MCF 10A (cell line): ENCODE measurements at regions of chr7 and their contacts with region 1.

Region 1: GRCh38 chr7:91089382-91089963 is 174.8 kb upstream of the FZD1 start:
- DNase-seq: peak; percentile 61
- H3K4me3 Mint-ChIP-seq: peak overlapping the region; percentile 56
- H3K27ac Mint-ChIP-seq: no peak overlapping the region
- H3K4me1 Mint-ChIP-seq: no peaks in the 10 kb centered on the region
- H3K27me3 Mint-ChIP-seq: no peaks in the 10 kb centered on the region
- CTCF ChIP-seq: peak; percentile 70

Region 2: DNA sequence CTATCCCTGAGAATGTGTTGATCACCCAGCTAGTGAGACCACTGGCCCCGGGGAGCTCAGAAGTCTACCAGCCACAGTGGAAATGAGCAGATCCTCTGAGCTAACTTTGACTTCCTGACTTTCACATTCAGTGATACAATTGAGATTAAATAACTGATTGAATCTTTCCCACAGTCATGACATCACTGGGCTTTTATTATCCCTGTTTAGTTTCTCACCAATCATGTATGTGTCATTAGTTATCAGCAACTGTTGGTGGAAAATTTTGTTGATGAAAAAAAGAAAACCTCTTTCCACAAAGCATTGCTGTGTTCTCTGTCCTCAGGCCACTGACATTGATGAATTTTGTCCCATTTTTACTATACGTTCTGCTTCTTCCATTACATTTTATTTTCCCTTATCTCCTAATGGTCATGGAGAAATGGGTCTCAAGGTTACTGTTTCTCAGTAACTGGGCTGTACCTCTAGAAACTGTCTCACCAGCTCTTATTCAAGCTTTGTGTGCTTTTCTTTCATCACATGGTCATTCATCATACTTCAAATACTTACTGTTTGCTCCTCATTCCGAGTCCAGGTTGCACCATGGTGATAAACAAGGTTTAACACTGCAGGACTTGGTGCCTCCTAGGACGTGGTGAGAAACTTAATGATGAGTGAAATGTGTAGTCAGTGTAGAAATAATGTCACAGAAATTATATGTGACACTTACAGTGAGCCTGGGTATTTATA is 188.7 kb before region 1 on chr7:
- CTCF ChIA-PET with region 1: no interaction called
- POLR2A ChIA-PET with region 1: no interaction called
- intact Hi-C with region 1: no loop called
- DNase-seq: no peak
- H3K4me3 Mint-ChIP-seq: no peak overlapping the region
- H3K27ac Mint-ChIP-seq: no peak overlapping the region
- H3K4me1 Mint-ChIP-seq: no peaks in the 10 kb centered on the region
- H3K27me3 Mint-ChIP-seq: no peaks in the 10 kb centered on the region
- CTCF ChIP-seq: no peak

Region 3: DNA sequence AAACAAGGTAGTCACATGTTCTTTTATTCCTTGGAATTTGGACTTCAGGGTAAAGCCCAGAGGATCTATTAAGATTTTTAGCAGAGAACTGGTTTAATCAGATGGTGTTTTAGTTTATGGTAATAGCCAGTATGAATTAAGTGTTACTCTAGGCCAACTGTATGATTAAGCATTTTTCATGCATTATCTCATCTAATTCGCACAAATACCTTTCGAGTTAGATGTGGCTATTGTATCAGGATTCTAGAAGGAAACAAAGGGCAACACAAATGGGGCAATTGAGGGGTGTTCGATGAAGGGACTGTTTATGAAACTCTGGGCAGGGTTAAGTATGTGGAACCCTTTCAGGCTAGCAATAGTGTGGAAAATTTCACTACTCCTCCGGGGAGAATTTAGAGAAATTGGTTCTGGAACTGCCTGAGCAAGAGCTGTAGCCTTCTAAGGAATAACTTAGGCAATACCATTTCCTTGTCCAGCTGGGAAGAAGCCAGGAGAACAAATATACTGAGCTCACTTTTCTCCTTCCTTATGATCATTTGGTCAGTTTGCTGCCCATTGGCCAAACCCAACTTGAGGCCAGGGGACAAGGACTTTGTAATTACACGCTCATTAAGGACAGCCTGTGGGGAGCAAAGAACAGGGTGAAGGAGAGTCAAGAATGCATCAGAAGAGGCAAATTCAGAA is 144.2 kb before region 1 on chr7:
- CTCF ChIA-PET with region 1: no interaction called
- POLR2A ChIA-PET with region 1: no interaction called
- intact Hi-C with region 1: no loop called
- DNase-seq: peak; percentile 6
- H3K4me3 Mint-ChIP-seq: no peak overlapping the region
- H3K27ac Mint-ChIP-seq: no peak overlapping the region
- H3K4me1 Mint-ChIP-seq: peaks cover 10% of the 10 kb centered on the region
- H3K27me3 Mint-ChIP-seq: no peaks in the 10 kb centered on the region
- CTCF ChIP-seq: no peak

Region 4: GRCh38 chr7:90958647-90959046 is 130.8 kb before region 1 on chr7:
- CTCF ChIA-PET with region 1: no interaction called
- POLR2A ChIA-PET with region 1: no interaction called
- intact Hi-C with region 1: no loop called
- DNase-seq: no peak
- H3K4me3 Mint-ChIP-seq: no peak overlapping the region
- H3K27ac Mint-ChIP-seq: no peak overlapping the region
- H3K4me1 Mint-ChIP-seq: peaks cover 8% of the 10 kb centered on the region
- H3K27me3 Mint-ChIP-seq: no peaks in the 10 kb centered on the region
- CTCF ChIP-seq: no peak

Region 5: GRCh38 chr7:91050677-91051076 is 38.8 kb before region 1 on chr7:
- CTCF ChIA-PET with region 1: no interaction called
- POLR2A ChIA-PET with region 1: no interaction called
- intact Hi-C with region 1: no loop called
- DNase-seq: no peak
- H3K4me3 Mint-ChIP-seq: no peak overlapping the region
- H3K27ac Mint-ChIP-seq: no peak overlapping the region
- H3K4me1 Mint-ChIP-seq: peaks cover 5% of the 10 kb centered on the region
- H3K27me3 Mint-ChIP-seq: no peaks in the 10 kb centered on the region
- CTCF ChIP-seq: no peak

Region 6: GRCh38 chr7:91107460-91107859 is 18.0 kb after region 1 on chr7:
- CTCF ChIA-PET with region 1: interaction called, 10 read pairs
- POLR2A ChIA-PET with region 1: no interaction called
- intact Hi-C with region 1: no loop called
- DNase-seq: no peak
- H3K4me3 Mint-ChIP-seq: no peak overlapping the region
- H3K27ac Mint-ChIP-seq: no peak overlapping the region
- H3K4me1 Mint-ChIP-seq: no peaks in the 10 kb centered on the region
- H3K27me3 Mint-ChIP-seq: no peaks in the 10 kb centered on the region
- CTCF ChIP-seq: no peak

Region 7: DNA sequence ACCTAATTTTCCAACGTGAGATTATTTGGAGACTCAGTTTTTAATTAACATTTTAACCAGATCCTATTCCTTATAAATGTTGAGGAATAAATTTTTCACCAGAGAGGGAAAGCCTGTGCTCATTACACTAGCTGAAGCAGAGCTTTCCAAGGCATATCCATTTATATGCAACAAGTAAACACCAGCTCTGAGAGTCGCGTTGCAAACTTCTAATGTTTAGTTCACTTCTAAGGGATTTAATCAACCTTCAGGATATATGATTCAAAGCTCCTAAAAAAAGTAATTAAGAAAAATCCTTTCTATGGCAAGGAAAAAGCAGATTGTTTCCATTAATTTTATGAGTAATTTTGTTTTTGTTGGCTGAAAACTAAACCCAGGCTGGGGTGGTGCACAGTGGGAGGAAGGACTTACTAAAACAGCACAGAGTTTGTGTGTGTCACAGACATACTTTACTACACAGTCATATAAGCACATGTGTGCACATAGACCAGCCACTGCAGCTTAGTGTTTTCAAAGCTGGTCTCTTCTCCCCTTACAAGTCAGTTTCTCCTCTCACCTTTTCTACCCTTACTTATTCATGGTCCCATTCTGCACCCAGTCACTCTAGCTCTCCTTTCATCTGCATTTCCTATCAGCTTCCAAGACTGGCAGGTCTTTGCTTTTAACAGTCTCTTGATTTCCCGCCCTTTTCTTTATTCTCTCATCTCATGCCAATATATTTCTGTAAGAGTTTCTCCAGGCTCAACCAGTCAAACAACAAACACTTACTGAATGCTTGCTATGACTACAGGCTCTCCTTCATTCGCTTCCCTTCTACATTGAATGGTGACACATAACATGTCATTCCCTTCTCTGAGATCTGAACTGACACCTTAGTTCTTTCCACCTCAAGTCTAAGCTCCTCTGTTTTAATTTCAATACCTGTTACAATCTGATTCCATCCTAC is 93.6 kb after region 1 on chr7:
- CTCF ChIA-PET with region 1: no interaction called
- POLR2A ChIA-PET with region 1: no interaction called
- intact Hi-C with region 1: loop called (anchors 1 kb)
- DNase-seq: peak; percentile 78
- H3K4me3 Mint-ChIP-seq: no peak overlapping the region
- H3K27ac Mint-ChIP-seq: peak overlapping the region; percentile 54
- H3K4me1 Mint-ChIP-seq: peaks cover 10% of the 10 kb centered on the region
- H3K27me3 Mint-ChIP-seq: no peaks in the 10 kb centered on the region
- CTCF ChIP-seq: no peak

Region 8: DNA sequence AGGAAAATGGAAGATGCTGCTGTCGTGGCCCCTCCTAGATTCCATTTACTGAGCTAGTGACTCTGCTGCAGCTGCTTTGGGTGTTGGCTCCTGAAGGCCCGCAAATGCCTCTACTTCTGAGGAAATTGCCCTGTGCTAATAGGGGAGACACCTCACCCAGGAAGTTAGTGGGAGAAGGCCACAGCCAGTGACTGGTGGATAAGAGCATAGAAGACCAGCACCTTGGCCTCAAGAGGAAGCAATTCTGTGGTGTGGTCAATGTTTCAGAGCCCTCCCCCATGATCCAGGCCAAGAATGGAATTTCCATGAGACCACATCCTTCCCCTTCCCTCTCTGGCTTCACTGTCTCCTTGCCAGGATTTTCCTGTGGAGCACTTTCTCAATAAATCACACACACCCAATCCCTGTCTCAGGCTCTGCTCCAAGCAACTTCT is 149.7 kb after region 1 on chr7:
- CTCF ChIA-PET with region 1: interaction called, 12 read pairs
- POLR2A ChIA-PET with region 1: interaction called, 3 read pairs
- intact Hi-C with region 1: no loop called
- DNase-seq: peak; percentile 81
- H3K4me3 Mint-ChIP-seq: peak overlapping the region; percentile 20
- H3K27ac Mint-ChIP-seq: peak overlapping the region; percentile 89
- H3K4me1 Mint-ChIP-seq: peaks cover 34% of the 10 kb centered on the region
- H3K27me3 Mint-ChIP-seq: no peaks in the 10 kb centered on the region
- CTCF ChIP-seq: no peak

Region 9: DNA sequence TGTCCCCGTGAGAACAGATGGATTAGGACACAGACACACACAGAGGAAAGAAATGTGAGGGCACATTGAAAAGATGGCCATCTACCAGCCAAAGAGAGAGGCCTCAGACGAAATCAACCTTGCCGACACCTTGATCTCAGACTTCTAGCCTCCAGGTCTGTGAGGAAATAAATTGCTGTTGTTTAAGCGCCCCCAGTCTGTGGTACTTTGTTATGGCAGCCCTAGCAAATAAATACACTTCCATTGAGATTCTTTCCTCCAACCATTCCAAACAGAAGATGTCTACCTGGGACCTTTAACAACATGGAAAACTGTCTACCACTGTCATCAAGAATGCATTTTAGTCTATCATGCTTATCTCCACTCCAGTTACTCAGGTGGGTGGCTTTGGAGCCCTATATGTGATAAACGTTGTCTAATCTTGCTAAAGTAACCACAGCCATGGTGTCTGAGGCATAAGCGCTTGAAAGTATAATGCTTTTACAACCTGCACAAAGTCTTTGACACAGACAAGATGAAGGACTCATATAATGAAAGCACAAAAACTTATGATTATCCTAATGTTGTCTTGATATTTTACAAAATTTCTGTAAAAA is 546.8 kb after region 1 on chr7:
- CTCF ChIA-PET with region 1: interaction called, 8 read pairs
- POLR2A ChIA-PET with region 1: no interaction called
- intact Hi-C with region 1: loop called (anchors 1 kb)
- DNase-seq: peak; percentile 67
- H3K4me3 Mint-ChIP-seq: no peak overlapping the region
- H3K27ac Mint-ChIP-seq: no peak overlapping the region
- H3K4me1 Mint-ChIP-seq: peaks cover 6% of the 10 kb centered on the region
- H3K27me3 Mint-ChIP-seq: no peaks in the 10 kb centered on the region
- CTCF ChIP-seq: peak; percentile 50

Region 10: GRCh38 chr7:91784463-91784862 is 695.0 kb after region 1 on chr7:
- CTCF ChIA-PET with region 1: interaction called, 45 read pairs
- POLR2A ChIA-PET with region 1: interaction called, 3 read pairs
- intact Hi-C with region 1: loop called (anchors 1 kb)
- DNase-seq: peak; percentile 63
- H3K4me3 Mint-ChIP-seq: no peak overlapping the region
- H3K27ac Mint-ChIP-seq: no peak overlapping the region
- H3K4me1 Mint-ChIP-seq: no peaks in the 10 kb centered on the region
- H3K27me3 Mint-ChIP-seq: no peaks in the 10 kb centered on the region
- CTCF ChIP-seq: peak; percentile 46

Region 11: DNA sequence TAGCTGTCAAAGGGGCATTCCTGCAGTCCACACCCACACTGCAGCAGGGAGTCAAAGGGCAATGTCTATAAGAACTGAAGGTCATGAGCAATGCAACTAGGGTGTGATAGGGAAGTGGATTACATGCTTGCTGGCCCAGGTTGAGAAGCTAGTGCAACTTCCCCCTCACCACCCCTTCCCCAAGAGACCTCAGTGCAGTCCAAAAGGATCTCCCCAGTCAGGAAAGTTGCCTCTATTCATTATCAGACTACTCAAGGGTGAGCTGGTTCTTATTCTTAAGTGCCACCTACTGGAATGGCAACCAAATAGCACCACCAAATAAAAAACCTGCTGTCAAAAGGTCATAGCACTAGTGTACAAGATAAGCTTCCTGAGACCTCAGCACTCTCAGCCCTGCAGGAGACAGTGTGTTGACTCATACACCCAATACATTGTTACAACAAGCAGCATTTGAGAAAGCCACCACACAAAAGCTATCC is 762.8 kb after region 1 on chr7:
- CTCF ChIA-PET with region 1: no interaction called
- POLR2A ChIA-PET with region 1: no interaction called
- intact Hi-C with region 1: loop called (anchors 10 kb)
- DNase-seq: peak; percentile 63
- H3K4me3 Mint-ChIP-seq: no peak overlapping the region
- H3K27ac Mint-ChIP-seq: no peak overlapping the region
- H3K4me1 Mint-ChIP-seq: peaks cover 26% of the 10 kb centered on the region
- H3K27me3 Mint-ChIP-seq: no peaks in the 10 kb centered on the region
- CTCF ChIP-seq: peak; percentile 25